Heart left ventricle (tissue), 16 donors: ENCODE measurements at regions of chr9 and their contacts with region 1.

Region 1: GRCh38 chr9:129910628-129911567 is 75.6 kb downstream of the USP20 start:
- DNase-seq: no peak
- ATAC-seq: peak in 2 of 4 donors; percentile 41 to 63
- H3K4me3 ChIP-seq: no peak overlapping the region
- H3K27ac ChIP-seq: peak overlapping the region in 1 of 12 donors; percentile 40
- H3K4me1 ChIP-seq: peaks cover 0 to 14% (median 0%) of the 10 kb centered on the region in 12 donors
- H3K27me3 ChIP-seq: no peaks in the 10 kb centered on the region
- CTCF ChIP-seq: no peak
- POLR2A ChIP-seq: no peak

Region 2: DNA sequence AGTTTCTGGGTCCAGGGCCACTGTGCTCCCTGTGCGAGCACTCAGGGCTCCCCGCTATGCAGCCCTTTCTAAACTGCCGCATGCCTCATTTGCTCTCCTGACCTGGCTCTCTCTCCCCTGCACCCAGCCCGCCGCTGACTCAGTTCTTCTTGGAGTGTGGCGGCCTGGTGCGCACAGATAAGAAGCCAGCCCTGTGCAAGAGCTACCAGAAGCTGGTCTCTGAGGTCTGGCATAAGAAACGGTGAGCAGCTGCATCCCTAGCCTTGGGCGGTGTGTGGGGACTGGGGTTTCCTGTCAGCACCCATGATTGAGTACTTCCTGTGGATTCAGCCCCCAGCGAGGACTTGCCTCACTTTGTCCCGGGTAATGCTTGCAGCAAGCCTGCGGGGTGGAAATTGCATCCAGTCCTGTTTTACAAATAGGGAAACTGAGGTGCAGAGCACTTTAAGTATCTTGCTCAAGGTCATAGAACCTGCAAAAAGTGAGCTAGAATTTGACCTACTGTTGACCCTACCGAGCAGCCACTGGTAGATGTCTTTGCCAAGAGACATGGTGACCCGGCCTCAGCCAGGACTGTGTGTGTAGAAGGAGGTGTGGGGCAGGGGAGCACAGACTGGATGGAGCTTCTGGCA is 47.7 kb before region 1 on chr9:
- intact Hi-C with region 1: no loop called
- DNase-seq: peak in 1 of 5 donors; percentile 64
- ATAC-seq: peak in 1 of 4 donors; percentile 32
- H3K4me3 ChIP-seq: no peak overlapping the region
- H3K27ac ChIP-seq: peak overlapping the region in 1 of 12 donors; percentile 42
- H3K4me1 ChIP-seq: peaks cover 0 to 31% (median 0%) of the 10 kb centered on the region in 12 donors
- H3K27me3 ChIP-seq: no peaks in the 10 kb centered on the region
- CTCF ChIP-seq: no peak
- POLR2A ChIP-seq: no peak

Region 3: DNA sequence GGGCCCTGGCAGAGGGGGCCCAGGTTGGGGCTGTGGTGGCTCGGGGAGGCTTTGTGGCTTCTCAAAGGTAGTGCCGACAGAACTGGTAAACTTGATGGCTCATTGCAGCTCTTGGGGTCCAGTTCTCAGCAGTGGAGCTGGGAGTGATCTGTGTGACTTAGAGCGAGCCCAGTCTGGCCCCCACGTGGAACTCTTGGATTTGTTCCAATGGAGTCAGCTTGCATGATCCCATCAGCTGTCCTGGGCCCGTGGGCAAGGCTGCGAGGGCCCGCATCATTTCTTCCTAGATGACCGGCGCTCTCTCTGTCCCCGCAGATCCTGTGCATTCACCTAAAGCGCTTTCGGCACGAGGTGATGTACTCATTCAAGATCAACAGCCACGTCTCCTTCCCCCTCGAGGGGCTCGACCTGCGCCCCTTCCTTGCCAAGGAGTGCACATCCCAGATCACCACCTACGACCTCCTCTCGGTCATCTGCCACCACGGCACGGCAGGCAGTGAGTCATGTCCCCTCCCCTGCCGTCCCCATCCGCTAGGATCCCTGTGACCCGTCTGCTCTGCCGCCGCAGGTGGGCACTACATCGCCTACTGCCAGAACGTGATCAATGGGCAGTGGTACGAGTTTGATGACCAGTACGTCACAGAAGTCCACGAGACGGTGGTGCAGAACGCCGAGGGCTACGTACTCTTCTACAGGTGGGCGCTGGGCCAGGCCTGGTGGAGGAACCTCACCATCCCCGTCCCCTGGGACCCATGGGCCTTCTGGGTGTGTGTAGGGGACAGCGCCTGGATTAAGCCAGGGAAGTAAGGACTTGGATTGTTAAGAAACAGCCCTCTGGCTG is 36.4 kb before region 1 on chr9:
- intact Hi-C with region 1: no loop called
- DNase-seq: no peak
- ATAC-seq: no peak
- H3K4me3 ChIP-seq: no peak overlapping the region
- H3K27ac ChIP-seq: no peak overlapping the region
- H3K4me1 ChIP-seq: no peaks in the 10 kb centered on the region
- H3K27me3 ChIP-seq: no peaks in the 10 kb centered on the region
- CTCF ChIP-seq: no peak
- POLR2A ChIP-seq: no peak

Region 4: DNA sequence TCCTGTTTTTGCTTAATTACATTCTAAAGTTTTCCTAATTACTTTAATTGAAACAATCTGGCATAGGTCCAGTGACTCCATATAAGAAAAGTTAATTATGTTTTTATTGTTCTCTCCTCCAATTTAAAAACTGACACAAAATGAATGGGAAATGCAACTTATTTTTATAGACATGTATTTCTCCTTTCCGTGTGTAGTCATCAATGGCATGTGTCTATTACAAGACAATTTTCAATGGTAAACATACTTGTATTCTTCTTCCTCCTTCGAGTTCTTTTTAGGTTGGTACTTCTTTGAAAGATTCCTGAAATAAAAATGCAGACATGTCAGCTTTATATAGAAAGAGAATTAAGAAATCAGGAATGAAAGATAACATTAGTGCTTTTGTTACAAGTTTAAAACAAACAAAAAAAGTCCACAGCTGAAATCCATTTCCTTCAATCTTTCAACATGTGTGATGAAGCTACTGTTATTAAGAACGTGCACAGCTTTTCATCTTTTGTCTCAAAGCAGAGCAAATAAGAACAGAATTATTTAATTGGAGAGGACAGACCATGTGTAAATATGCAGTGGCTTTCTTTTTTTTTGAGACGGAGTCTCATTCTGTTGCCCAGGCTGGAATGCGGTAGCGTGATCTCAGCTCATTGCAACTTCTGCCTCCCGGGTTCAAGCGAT is 68.3 kb after region 1 on chr9:
- intact Hi-C with region 1: loop called in 1 of 10 experiments (anchors 10 kb)
- DNase-seq: no peak
- ATAC-seq: no peak
- H3K4me3 ChIP-seq: no peak overlapping the region
- H3K27ac ChIP-seq: peak overlapping the region in 2 of 12 donors; percentile 19 to 32
- H3K4me1 ChIP-seq: peaks cover 0 to 47% (median 1%) of the 10 kb centered on the region in 12 donors
- H3K27me3 ChIP-seq: no peaks in the 10 kb centered on the region
- CTCF ChIP-seq: no peak
- POLR2A ChIP-seq: no peak